ENCODE measurements at regions of chr1 and their contacts with region 1.

Region 1: DNA sequence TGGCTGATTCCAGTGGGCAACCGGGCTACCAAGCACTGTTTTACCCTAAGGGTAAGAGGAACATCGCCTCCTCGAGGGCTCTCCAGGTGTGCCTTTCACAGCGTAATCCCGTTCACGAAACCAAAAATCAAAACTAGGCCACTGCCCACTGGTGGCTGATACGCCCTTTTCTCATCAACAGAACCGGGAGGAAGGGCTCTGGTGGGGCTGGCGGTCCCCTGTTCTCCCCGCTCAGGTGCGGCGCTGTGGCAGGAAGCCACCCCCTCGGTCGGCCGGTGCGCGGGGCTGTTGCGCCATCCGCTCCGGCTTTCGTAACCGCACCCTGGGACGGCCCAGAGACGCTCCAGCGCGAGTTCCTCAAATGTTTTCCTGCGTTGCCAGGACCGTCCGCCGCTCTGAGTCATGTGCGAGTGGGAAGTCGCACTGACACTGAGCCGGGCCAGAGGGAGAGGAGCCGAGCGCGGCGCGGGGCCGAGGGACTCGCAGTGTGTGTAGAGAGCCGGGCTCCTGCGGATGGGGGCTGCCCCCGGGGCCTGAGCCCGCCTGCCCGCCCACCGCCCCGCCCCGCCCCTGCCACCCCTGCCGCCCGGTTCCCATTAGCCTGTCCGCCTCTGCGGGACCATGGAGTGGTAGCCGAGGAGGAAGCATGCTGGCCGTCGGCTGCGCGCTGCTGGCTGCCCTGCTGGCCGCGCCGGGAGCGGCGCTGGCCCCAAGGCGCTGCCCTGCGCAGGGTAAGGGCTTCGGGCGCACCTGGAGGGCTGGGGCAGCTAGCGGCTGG is at the start of gene IL6R:
- DNase-seq: no peak
- ATAC-seq: peak; percentile 52
- H3K4me3 ChIP-seq: peak within 1 kb of the TSS; percentile 75
- H3K27ac ChIP-seq: peak within 1 kb of the TSS; percentile 83
- H3K4me1 ChIP-seq: peaks cover 68% of the 10 kb centered on the region
- H3K27me3 ChIP-seq: no peaks in the 10 kb centered on the region
- CTCF ChIP-seq: peak; percentile 46 to 63 (median 54); a peak in 5 of 6 replicates
- EP300 ChIP-seq: no peak
- POLR2A ChIP-seq: no peak; the same call in 1 of the 2 replicates
- RAD21 ChIP-seq: peak; percentile 55; the same call in 1 of the 2 replicates
- polyA plus RNA-seq, gene IL6R: 1.9 to 3.9 TPM

Region 2: DNA sequence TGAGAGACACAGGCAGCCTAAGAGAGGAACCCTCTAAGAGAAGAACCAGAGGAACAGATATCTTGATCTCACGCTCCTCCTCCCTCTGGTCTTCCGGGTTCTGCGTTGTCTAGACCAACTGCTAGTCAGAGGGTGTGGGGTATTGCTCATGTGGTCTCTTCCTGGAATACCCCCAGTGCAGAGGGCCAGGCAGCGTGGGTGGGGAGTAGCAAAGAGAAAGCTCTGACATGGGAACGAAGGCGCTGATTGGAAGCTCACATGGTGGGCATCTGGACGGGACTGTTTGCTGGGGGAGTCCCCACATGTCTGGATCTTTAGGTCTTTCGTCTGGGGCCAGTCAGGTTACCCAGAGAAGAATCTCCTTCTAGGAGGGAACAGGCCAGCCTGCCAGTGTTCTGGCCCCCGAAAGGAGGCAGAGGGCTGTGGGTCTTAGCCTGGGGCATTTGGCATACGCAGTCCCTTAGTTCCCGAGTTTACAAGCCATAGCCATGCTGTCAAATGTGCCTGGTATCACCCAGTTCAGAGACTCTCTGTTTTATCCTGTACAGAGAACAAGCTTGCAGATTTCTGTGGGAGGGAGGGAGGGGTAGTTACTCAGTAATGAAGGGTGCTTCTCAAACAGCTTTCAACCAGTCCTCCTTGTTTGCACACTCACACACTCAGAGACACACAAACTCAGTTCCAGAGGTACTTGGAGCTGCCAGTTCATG is 18.4 kb before region 1 on chr1:
- CTCF ChIA-PET with region 1: interaction called, 12 read pairs
- POLR2A ChIA-PET with region 1: interaction called, 20 read pairs
- RAD21 ChIA-PET with region 1: interaction called, 42 read pairs
- SMC1A ChIA-PET with region 1: interaction called, 41 read pairs
- in situ Hi-C with region 1: no loop called
- intact Hi-C with region 1: no loop called
- DNase-seq: no peak
- ATAC-seq: peak; percentile 91
- H3K4me3 ChIP-seq: no peak overlapping the region
- H3K27ac ChIP-seq: no peak overlapping the region
- H3K4me1 ChIP-seq: no peaks in the 10 kb centered on the region; the same call in 1 of the 2 replicates
- H3K27me3 ChIP-seq: no peaks in the 10 kb centered on the region
- CTCF ChIP-seq: no peak
- EP300 ChIP-seq: no peak
- POLR2A ChIP-seq: no peak
- RAD21 ChIP-seq: no peak

Region 3: GRCh38 chr1:154434346-154435085 is 29.3 kb after region 1 on chr1:
- CTCF ChIA-PET with region 1: interaction called, 67 read pairs
- POLR2A ChIA-PET with region 1: interaction called, 20 read pairs
- RAD21 ChIA-PET with region 1: interaction called, 80 read pairs
- SMC1A ChIA-PET with region 1: interaction called, 89 read pairs
- in situ Hi-C with region 1: no loop called
- intact Hi-C with region 1: no loop called
- DNase-seq: no peak
- ATAC-seq: no peak
- H3K4me3 ChIP-seq: no peak overlapping the region
- H3K27ac ChIP-seq: no peak overlapping the region
- H3K4me1 ChIP-seq: peaks cover 12% of the 10 kb centered on the region
- H3K27me3 ChIP-seq: no peaks in the 10 kb centered on the region
- CTCF ChIP-seq: no peak
- EP300 ChIP-seq: no peak
- POLR2A ChIP-seq: no peak
- RAD21 ChIP-seq: no peak

Region 4: DNA sequence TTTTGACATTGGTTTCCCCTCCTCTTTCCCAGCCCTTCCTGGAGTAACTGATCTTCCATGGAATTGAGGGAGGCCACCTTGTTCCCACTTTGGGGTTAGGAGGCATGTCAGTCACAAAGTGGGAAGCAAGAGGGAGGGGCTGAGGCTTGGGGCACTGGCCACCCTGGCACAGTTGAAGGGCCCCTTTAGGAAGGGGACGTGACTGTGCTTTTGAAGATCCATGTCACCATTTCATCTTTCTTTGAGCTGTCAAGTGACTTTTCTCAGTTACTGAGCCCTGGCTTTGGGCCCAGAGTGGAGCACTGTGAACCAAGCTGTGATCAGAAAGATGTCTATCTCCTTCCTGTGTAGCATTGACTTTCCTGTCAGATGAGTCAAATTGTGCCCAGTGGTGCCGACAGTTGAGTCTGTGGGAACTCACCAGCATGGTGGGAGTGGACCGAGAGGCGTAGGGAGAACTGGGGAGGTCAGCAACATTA is 58.4 kb after region 1 on chr1:
- CTCF ChIA-PET with region 1: interaction called, 54 read pairs
- POLR2A ChIA-PET with region 1: interaction called, 8 read pairs
- RAD21 ChIA-PET with region 1: interaction called, 53 read pairs
- SMC1A ChIA-PET with region 1: interaction called, 24 read pairs
- in situ Hi-C with region 1: no loop called
- intact Hi-C with region 1: loop called (anchors 1 kb)
- DNase-seq: peak; percentile 46
- ATAC-seq: peak; percentile 42
- H3K4me3 ChIP-seq: no peak overlapping the region
- H3K27ac ChIP-seq: no peak overlapping the region
- H3K4me1 ChIP-seq: peaks cover 20% of the 10 kb centered on the region
- H3K27me3 ChIP-seq: no peaks in the 10 kb centered on the region
- CTCF ChIP-seq: no peak
- EP300 ChIP-seq: no peak
- POLR2A ChIP-seq: no peak
- RAD21 ChIP-seq: no peak

Region 5: GRCh38 chr1:154635162-154635561 is 230.0 kb after region 1 on chr1:
- CTCF ChIA-PET with region 1: no interaction called
- POLR2A ChIA-PET with region 1: no interaction called
- RAD21 ChIA-PET with region 1: no interaction called
- SMC1A ChIA-PET with region 1: no interaction called
- in situ Hi-C with region 1: no loop called
- intact Hi-C with region 1: no loop called
- DNase-seq: no peak
- ATAC-seq: no peak
- H3K4me3 ChIP-seq: no peak overlapping the region
- H3K27ac ChIP-seq: no peak overlapping the region
- H3K4me1 ChIP-seq: no peaks in the 10 kb centered on the region
- H3K27me3 ChIP-seq: no peaks in the 10 kb centered on the region; a peak in 1 of 4 replicates
- CTCF ChIP-seq: no peak
- EP300 ChIP-seq: no peak
- POLR2A ChIP-seq: no peak
- RAD21 ChIP-seq: no peak